IMR-90 (cell line): ENCODE measurements at regions of chr2 and their contacts with region 1.

Region 1: DNA sequence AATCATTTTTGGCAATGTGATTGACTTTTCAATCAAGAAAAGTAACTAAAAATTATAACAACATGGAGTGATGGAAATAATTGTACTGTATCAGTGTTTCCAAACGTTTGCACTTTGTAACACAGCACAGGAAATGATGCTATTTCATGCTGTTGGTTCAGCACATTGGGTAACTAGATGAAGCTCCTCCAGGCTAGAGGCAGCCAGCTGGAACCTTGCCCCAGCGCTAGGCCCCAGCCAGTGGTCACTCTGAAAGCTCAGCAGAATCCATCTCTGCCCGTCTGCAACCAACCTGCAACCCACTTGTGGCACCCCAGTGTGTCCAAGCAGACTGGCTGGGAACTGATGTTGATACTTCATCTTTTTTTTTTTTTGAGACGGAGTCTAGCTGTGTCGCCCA is 15.3 kb downstream of the UNC50 start:
- DNase-seq: peak; percentile 37
- ATAC-seq: no peak
- H3K4me3 ChIP-seq: no peak overlapping the region
- H3K27ac ChIP-seq: no peak overlapping the region
- H3K4me1 ChIP-seq: no peaks in the 10 kb centered on the region
- H3K27me3 ChIP-seq: peaks cover under 1% of the 10 kb centered on the region
- CTCF ChIP-seq: no peak
- POLR2A ChIP-seq: no peak
- RAD21 ChIP-seq: no peak

Region 2: GRCh38 chr2:98637401-98638147 is 13.9 kb after region 1 on chr2:
- CTCF ChIA-PET with region 1: no interaction called
- POLR2A ChIA-PET with region 1: no interaction called
- dilution Hi-C with region 1: no loop called
- in situ Hi-C with region 1: no loop called
- intact Hi-C with region 1: loop called (anchors 2 kb)
- DNase-seq: no peak
- ATAC-seq: no peak
- H3K4me3 ChIP-seq: no peak overlapping the region
- H3K27ac ChIP-seq: no peak overlapping the region
- H3K4me1 ChIP-seq: no peaks in the 10 kb centered on the region
- H3K27me3 ChIP-seq: peaks cover 3% of the 10 kb centered on the region; the same call in 1 of the 2 replicates
- CTCF ChIP-seq: no peak
- POLR2A ChIP-seq: no peak
- RAD21 ChIP-seq: no peak